Heart right ventricle (tissue), 16 donors: ENCODE measurements at regions of chr3 and their contacts with region 1.

Region 1: DNA sequence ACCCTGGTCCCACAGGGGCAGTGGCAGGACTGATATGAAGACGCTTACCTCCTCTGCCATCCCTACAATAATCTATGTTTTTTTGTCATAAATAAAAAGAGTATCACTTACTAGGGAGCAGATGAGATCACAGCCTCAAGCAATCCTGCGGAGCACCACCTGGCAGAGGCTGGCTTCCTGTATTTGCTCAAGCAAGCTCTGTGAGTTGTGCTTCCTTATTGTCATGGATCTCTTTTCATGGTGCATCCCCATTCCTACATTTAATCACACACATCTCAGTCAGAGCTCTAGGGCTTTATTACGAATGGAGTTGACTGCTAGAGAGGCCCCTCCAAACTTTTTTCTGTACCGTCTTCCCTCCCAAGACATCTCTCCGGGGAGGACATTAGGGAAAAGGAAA is 186.0 kb downstream of the UBE2E2 start:
- DNase-seq: no peak
- ATAC-seq: no peak
- H3K4me3 ChIP-seq: no peak overlapping the region
- H3K27ac ChIP-seq: no peak overlapping the region
- H3K4me1 ChIP-seq: peaks cover 0 to 30% (median 21%) of the 10 kb centered on the region in 9 donors
- H3K27me3 ChIP-seq: no peaks in the 10 kb centered on the region
- CTCF ChIP-seq: no peak

Region 2: GRCh38 chr3:22555753-22556435 is 833.2 kb before region 1 on chr3:
- intact Hi-C with region 1: loop called in 1 of 10 experiments (anchors 5 kb)
- DNase-seq: no peak
- ATAC-seq: no peak
- H3K4me3 ChIP-seq: no peak overlapping the region
- H3K27ac ChIP-seq: no peak overlapping the region
- H3K4me1 ChIP-seq: no peaks in the 10 kb centered on the region
- H3K27me3 ChIP-seq: no peaks in the 10 kb centered on the region
- CTCF ChIP-seq: no peak

Region 3: DNA sequence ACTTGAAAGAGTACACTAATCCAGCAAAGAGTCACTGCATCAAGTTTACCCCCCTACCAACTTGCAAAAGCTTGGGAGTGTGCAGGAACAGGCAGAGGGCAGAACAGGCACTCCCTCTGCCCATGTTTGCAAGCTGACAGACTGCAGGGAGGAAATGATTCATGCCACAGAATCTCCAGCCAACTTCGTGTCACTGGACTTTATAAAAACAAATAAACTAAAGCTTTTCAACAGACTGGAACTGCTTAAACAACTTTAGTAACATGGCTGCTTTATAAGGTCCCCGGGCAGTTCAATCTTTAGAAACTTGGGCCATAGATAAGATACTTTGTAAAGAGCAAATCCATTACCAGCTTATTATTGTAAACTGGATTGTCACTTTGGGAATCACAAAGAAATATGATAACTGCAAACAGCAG is 976.1 kb after region 1 on chr3:
- intact Hi-C with region 1: no loop called
- DNase-seq: peak in 1 of 2 donors; percentile 51
- ATAC-seq: peak; percentile 74 to 95 (median 88)
- H3K4me3 ChIP-seq: no peak overlapping the region
- H3K27ac ChIP-seq: peak overlapping the region in 5 of 10 donors; percentile 17 to 55 (median 46)
- H3K4me1 ChIP-seq: peaks cover 0 to 39% (median 19%) of the 10 kb centered on the region in 9 donors
- H3K27me3 ChIP-seq: no peaks in the 10 kb centered on the region
- CTCF ChIP-seq: peak in 7 of 9 donors; percentile 8 to 52 (median 22)